Heart right ventricle (tissue), 16 donors: ENCODE measurements at regions of chr9 and their contacts with region 1.

Region 1: DNA sequence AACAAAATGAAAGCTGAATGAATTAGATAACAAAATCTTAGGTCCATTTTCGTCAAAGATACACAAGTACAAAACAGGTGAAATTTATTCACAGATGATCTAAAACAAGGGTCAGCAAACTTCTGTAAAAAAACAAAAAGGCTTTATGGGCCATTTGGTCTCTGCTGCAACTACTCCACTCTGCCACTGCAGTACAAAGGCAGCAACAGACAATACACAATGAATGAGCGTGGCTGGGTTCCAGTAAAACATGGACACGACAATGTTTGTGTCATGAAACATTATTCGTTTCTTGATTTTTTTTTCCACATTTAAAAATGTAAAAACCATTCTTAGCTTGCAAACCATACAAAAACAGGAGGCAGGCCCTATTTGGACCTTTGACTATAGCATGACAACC is 71.9 kb downstream of the ECPAS start:
- DNase-seq: no peak
- ATAC-seq: no peak
- H3K4me3 ChIP-seq: no peak overlapping the region
- H3K27ac ChIP-seq: no peak overlapping the region
- H3K4me1 ChIP-seq: peaks cover 0 to 7% (median 0%) of the 10 kb centered on the region in 9 donors
- H3K27me3 ChIP-seq: no peaks in the 10 kb centered on the region
- CTCF ChIP-seq: no peak

Region 2: DNA sequence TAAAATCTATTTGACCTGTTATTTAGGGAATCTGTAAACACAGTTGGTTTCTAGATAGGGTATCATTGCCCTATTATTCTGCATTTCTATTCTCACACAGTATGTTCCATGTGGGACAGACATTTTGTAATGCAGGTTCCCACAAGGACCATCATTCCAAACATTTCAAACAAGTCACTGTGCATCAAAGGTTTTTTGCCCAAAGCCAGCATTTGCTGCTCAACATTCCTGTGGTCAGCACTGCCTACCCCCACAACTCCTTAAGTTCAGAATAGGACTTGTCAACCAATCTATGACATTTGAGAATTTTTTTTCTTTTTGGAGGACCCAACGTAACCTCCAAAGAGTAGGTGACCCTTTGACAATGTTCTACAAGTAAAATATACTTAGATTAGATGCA is 469.8 kb before region 1 on chr9:
- intact Hi-C with region 1: no loop called
- DNase-seq: no peak
- ATAC-seq: no peak
- H3K4me3 ChIP-seq: no peak overlapping the region
- H3K27ac ChIP-seq: no peak overlapping the region
- H3K4me1 ChIP-seq: peaks cover 0 to 5% (median 0%) of the 10 kb centered on the region in 9 donors
- H3K27me3 ChIP-seq: peaks cover 0 to 4% (median 0%) of the 10 kb centered on the region in 7 donors
- CTCF ChIP-seq: no peak

Region 3: DNA sequence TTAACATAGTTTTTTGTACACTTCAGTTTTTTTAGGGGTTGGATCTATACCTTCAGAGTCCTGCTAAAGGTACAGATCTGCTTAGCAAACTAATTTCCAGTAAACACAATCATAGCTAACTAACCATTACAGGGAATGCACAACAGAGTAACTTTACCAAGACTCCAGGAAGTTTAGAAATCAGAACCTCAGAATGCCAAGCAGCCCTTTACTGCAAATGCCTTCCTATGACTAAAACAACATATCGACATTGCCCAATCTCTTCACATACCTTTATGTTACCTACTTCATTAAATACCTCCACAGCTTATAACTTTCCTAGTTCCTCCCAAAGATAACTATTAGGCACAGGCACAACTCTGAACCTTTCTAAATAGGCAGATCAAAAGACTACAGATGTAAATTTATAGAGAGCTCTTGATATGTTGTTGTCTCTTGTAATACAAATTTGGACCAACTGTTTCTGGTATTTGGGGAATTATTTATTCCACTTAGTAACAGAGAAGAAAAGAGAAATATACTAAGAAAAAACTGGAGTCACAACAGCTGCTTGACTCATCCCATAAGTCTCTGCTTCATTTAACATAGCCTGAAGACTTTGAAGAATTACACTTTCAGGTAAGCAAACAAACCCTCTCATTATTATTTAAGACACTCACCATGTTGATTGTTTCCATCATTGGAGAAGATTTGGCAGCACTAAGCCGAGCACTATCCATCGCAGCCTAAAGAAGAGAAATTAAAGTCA is 36.3 kb before region 1 on chr9:
- intact Hi-C with region 1: loop called in 1 of 10 experiments (anchors 1 kb)
- DNase-seq: no peak
- ATAC-seq: no peak
- H3K4me3 ChIP-seq: no peak overlapping the region
- H3K27ac ChIP-seq: no peak overlapping the region
- H3K4me1 ChIP-seq: no peaks in the 10 kb centered on the region
- H3K27me3 ChIP-seq: no peaks in the 10 kb centered on the region
- CTCF ChIP-seq: no peak

Region 4: GRCh38 chr9:112793213-112793810 is 1381.0 kb after region 1 on chr9:
- intact Hi-C with region 1: loop called in 1 of 10 experiments (anchors 5 kb)
- DNase-seq: peak; percentile 36 to 71
- ATAC-seq: peak; percentile 59 to 88 (median 74)
- H3K4me3 ChIP-seq: no peak overlapping the region
- H3K27ac ChIP-seq: no peak overlapping the region
- H3K4me1 ChIP-seq: peaks cover 0 to 18% (median 7%) of the 10 kb centered on the region in 9 donors
- H3K27me3 ChIP-seq: no peaks in the 10 kb centered on the region
- CTCF ChIP-seq: peak in 8 of 9 donors; percentile 25 to 78 (median 62)